Naive thymus-derived CD4-positive, alpha-beta T cell (primary cell): ENCODE measurements at regions of chr5 and their contacts with region 1.

Region 1: DNA sequence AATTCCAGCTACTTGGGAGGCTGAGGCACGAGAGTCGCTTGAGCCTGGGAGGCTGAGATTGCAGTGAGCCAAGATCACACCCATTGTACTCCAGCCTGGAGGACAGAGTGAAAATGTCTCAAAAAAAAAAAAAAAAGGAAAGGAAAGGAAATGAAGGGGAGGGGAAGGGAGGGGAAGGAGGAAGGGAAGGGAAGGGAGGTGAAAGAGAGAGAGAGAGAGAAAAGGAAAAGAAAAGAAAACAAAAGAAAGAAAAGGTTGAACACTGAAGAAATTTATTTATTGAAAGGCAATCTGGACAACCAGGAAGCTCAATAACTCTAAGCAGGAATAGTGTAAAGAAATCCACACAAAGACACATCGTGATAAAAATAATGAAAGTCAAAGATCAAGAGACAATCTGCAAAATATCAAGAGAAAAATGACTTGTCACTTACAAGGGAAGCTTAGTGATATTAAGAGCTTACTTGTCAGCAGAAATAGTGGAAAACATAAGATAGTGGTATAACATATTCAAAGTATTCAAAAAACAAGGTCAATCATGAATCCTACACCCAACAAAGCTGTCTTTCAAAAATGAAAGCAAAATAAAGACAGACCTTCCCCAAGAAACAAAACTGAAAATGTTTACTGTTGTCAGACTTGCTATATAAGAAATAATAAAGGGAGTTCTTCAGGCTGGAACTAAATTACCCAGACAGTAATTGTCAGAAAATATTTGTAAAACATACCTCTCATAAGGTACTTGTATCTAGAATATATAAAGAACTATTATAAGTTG is 10.9 kb upstream of the RIMOC1 start:
- DNase-seq: no peak
- ATAC-seq: no peak
- H3K4me3 ChIP-seq: no peak overlapping the region
- H3K4me3 Mint-ChIP-seq: peak overlapping the region in 1 of 10 donors; percentile 65
- H3K27ac ChIP-seq: no peak overlapping the region
- H3K27ac Mint-ChIP-seq: peak overlapping the region in 1 of 9 donors; percentile 75
- H3K4me1 ChIP-seq: no peaks in the 10 kb centered on the region
- H3K4me1 Mint-ChIP-seq: peaks cover 0 to 25% (median 6%) of the 10 kb centered on the region in 7 donors
- H3K27me3 ChIP-seq: no peaks in the 10 kb centered on the region
- H3K27me3 Mint-ChIP-seq: peaks cover 28 to 52% (median 34%) of the 10 kb centered on the region in 5 donors

Region 2: GRCh38 chr5:41869739-41870626 is 23.3 kb before region 1 on chr5 and contains the start of gene OXCT1:
- CTCF ChIA-PET with region 1: no interaction called
- POLR2A ChIA-PET with region 1: no interaction called
- intact Hi-C with region 1: loop called in 1 of 2 experiments (anchors 1 kb)
- DNase-seq: peak; percentile 88 to 96 (median 95)
- ATAC-seq: peak; percentile 97
- H3K4me3 ChIP-seq: peak within 1 kb of the TSS; percentile 91
- H3K4me3 Mint-ChIP-seq: peak within 1 kb of the TSS; percentile 85 to 94 (median 90)
- H3K27ac ChIP-seq: peak within 1 kb of the TSS; percentile 97
- H3K27ac Mint-ChIP-seq: peak within 1 kb of the TSS; percentile 89 to 98 (median 97)
- H3K4me1 ChIP-seq: peaks cover 16% of the 10 kb centered on the region in 2 donors
- H3K4me1 Mint-ChIP-seq: peaks cover 18 to 63% (median 57%) of the 10 kb centered on the region in 7 donors
- H3K27me3 ChIP-seq: no peaks in the 10 kb centered on the region
- H3K27me3 Mint-ChIP-seq: no peaks in the 10 kb centered on the region
- total RNA-seq, gene OXCT1: 18.6 to 53.1 (median 30.0) TPM

Region 3: DNA sequence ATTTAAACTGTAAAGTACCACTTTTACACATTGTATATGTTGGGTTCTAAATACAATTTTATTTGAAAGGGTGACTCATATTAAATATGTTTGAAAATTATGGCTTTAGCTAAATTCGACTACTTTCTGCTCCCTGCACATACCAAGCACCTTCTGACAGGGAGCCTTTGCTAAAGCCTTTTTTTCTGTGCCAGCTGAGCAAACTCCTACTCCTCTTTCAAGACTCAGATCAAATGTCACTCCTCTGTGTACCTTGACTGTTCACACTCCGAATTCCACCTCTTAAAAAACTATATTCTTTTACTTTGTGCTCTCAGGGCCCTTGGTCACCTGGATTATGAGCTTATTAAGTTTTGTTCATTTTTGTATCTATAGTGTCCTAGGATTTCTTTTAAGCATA is 16.6 kb before region 1 on chr5:
- CTCF ChIA-PET with region 1: no interaction called
- POLR2A ChIA-PET with region 1: no interaction called
- intact Hi-C with region 1: loop called in 1 of 2 experiments (anchors 1 kb)
- DNase-seq: no peak
- ATAC-seq: no peak
- H3K4me3 ChIP-seq: no peak overlapping the region
- H3K4me3 Mint-ChIP-seq: no peak overlapping the region
- H3K27ac ChIP-seq: no peak overlapping the region
- H3K27ac Mint-ChIP-seq: no peak overlapping the region
- H3K4me1 ChIP-seq: no peaks in the 10 kb centered on the region
- H3K4me1 Mint-ChIP-seq: peaks cover 0 to 15% (median 8%) of the 10 kb centered on the region in 7 donors
- H3K27me3 ChIP-seq: no peaks in the 10 kb centered on the region
- H3K27me3 Mint-ChIP-seq: peaks cover 3 to 16% (median 8%) of the 10 kb centered on the region in 5 donors